MCF 10A (cell line): ENCODE measurements at regions of chr6 and their contacts with region 1.

Region 1: DNA sequence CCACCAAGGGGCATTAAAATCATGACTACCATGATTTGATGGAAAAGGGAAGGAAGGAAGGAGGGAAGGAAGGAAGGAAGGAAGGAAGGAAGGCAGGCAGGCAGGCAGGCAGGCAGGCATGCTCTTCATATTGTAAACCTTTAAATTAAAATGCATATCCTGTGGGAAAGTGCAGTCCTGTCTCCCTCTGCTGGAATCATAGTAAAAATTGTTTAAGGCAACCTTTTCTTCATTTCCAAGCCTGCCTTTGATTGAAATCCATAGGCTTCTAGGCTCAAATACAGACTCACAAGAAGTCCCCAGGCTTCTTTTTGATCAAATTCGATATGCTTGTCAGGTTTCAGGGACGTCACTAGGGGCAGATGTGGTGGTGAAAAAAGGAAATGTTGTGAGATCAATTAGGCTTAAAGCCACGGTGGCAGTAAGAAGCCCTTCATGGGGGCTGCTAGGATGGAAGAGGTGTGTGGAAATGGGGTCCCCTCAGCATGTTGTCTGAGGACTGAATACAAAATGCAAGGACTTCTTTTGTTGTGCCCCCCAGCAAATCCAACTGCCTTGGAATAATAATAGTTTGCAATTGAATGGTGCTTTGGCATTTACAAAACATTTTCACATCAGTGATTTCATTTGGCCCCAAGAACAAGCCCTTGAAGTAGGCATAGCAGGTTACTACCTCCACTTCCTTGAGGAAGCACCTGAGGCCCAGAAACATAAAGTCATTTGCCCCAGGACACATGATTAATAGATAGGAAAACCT is 25.6 kb upstream of the GABRR1 start:
- DNase-seq: peak; percentile 62
- H3K4me3 Mint-ChIP-seq: no peak overlapping the region
- H3K27ac Mint-ChIP-seq: no peak overlapping the region
- H3K4me1 Mint-ChIP-seq: peaks cover 6% of the 10 kb centered on the region
- H3K27me3 Mint-ChIP-seq: peaks cover 28% of the 10 kb centered on the region
- CTCF ChIP-seq: peak; percentile 56

Region 2: DNA sequence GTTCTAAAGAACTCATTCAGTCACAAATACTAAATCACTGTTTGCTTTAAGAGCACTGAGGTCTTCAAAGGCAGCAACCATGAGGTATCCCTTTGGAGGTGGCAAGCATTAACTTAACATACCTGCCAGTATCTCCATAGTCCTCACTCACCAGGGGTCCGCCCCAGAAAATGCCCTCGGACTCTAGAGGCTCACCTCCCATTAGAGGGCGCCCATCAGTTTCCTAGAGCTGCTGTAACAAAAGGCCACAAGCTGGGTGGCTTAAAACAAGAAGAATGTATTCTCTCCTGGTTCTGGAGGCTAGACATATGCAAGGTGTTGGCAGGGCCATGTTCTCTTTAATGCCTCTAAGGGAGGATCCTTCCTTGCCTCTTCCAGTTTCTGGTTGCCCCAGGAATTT is 267.4 kb before region 1 on chr6:
- CTCF ChIA-PET with region 1: interaction called, 10 read pairs
- POLR2A ChIA-PET with region 1: no interaction called
- intact Hi-C with region 1: no loop called
- DNase-seq: no peak
- H3K4me3 Mint-ChIP-seq: no peak overlapping the region
- H3K27ac Mint-ChIP-seq: no peak overlapping the region
- H3K4me1 Mint-ChIP-seq: no peaks in the 10 kb centered on the region
- H3K27me3 Mint-ChIP-seq: no peaks in the 10 kb centered on the region
- CTCF ChIP-seq: no peak

Region 3: GRCh38 chr6:89117211-89118108 is 125.3 kb before region 1 on chr6 and contains the start of gene SRSF12:
- CTCF ChIA-PET with region 1: interaction called, 21 read pairs
- POLR2A ChIA-PET with region 1: no interaction called
- intact Hi-C with region 1: loop called (anchors 1 kb)
- DNase-seq: peak; percentile 34
- H3K4me3 Mint-ChIP-seq: peak within 1 kb of the TSS; percentile 79
- H3K27ac Mint-ChIP-seq: no peak within 1 kb of the TSS
- H3K4me1 Mint-ChIP-seq: no peaks in the 10 kb centered on the region
- H3K27me3 Mint-ChIP-seq: no peaks in the 10 kb centered on the region
- CTCF ChIP-seq: no peak
- total RNA-seq, gene SRSF12: 1.1 and 1.2 TPM in 2 replicates

Region 4: DNA sequence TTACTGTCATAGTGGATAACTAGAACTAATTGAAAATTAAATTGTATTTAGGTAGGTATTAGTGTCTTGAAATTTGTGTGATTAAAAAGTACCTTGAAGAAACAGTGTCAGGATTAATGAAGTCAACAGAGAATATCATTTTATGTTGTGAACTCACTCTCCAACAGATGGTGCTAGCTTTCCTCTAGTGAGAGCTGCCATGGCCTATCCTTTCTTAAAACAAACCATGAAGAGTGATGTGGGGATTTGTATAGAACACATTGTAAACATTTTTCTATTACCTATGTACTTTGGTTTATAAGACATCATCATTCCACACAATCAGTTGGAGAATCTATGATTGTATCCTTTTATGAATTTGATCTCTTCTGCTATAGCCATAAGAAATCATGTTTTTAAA is 120.1 kb before region 1 on chr6:
- CTCF ChIA-PET with region 1: interaction called, 21 read pairs
- POLR2A ChIA-PET with region 1: no interaction called
- intact Hi-C with region 1: loop called (anchors 1 kb)
- DNase-seq: peak; percentile 48
- H3K4me3 Mint-ChIP-seq: no peak overlapping the region
- H3K27ac Mint-ChIP-seq: no peak overlapping the region
- H3K4me1 Mint-ChIP-seq: no peaks in the 10 kb centered on the region
- H3K27me3 Mint-ChIP-seq: no peaks in the 10 kb centered on the region
- CTCF ChIP-seq: peak; percentile 70